ENCODE measurements at regions of chr10 and their contacts with region 1.

Region 1: DNA sequence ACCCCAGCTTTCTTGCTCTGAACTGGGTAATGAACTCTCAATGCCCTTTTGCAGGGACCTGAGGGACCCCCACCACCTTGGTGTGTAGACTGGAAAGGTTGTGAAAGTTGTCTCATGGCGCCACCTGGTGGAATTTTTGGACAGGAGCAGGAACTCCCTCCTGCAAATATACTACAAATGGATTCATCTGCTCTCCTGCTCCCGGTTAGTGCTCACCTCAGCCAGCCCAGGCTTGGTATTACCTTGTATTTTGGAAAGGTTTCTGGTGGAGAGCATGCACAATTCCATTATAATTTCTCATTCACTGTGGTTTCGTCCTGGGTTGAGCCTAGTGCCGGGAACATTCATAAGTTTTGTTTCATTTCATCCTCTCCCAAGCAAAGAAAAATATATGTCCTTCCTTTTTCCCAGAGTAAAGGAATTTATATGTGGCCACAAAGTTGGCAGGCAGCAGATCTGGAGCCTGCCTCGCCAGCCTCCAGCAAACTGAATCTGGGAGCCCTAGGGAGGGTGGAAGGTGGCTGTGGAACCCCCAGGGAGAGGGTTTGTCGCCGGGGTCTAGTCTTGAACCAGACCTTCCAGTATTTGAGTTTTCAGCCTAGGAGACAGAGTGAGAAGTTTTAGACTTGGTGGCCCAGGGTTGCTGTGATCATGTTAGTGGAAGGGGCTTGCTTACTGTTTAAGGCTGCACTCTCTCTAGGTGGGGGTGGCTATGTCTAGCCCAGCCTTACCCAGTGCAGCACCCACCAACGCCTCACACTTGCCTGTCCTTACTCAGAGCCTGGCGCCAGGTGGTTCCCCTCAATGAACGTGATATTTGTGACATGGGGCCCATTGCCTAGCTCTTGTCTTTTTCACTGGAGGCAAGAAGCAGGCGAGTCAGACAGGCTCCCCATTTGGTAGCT is 9.5 kb downstream of the FAM241B start:
- DNase-seq: peak in 2 of 3 donors; percentile 58 to 82
- ATAC-seq: peak; percentile 38 to 58
- H3K4me3 ChIP-seq: no peak overlapping the region
- H3K27ac ChIP-seq: no peak overlapping the region
- H3K4me1 ChIP-seq: no peaks in the 10 kb centered on the region
- H3K27me3 ChIP-seq: no peaks in the 10 kb centered on the region

Region 2: GRCh38 chr10:69408318-69409175 is 231.0 kb before region 1 on chr10:
- intact Hi-C with region 1: loop called in 1 of 4 experiments (anchors 10 kb)
- DNase-seq: peak; percentile 97 to 98 (median 98)
- ATAC-seq: peak; percentile 83 to 87
- H3K4me3 ChIP-seq: peak overlapping the region; percentile 26
- H3K27ac ChIP-seq: peak overlapping the region; percentile 90
- H3K4me1 ChIP-seq: peaks cover 10% of the 10 kb centered on the region
- H3K27me3 ChIP-seq: no peaks in the 10 kb centered on the region

Region 3: GRCh38 chr10:69425511-69426298 is 213.8 kb before region 1 on chr10:
- intact Hi-C with region 1: loop called in 3 of 4 experiments (anchors 10 kb)
- DNase-seq: no peak
- ATAC-seq: no peak
- H3K4me3 ChIP-seq: no peak overlapping the region
- H3K27ac ChIP-seq: no peak overlapping the region
- H3K4me1 ChIP-seq: no peaks in the 10 kb centered on the region
- H3K27me3 ChIP-seq: no peaks in the 10 kb centered on the region

Region 4: GRCh38 chr10:69515699-69516259 is 123.8 kb before region 1 on chr10:
- intact Hi-C with region 1: loop called (anchors 2 to 5 kb)
- DNase-seq: peak; percentile 64 to 85 (median 85)
- ATAC-seq: peak; percentile 84 to 88
- H3K4me3 ChIP-seq: no peak overlapping the region
- H3K27ac ChIP-seq: no peak overlapping the region
- H3K4me1 ChIP-seq: no peaks in the 10 kb centered on the region
- H3K27me3 ChIP-seq: no peaks in the 10 kb centered on the region

Region 5: GRCh38 chr10:69716711-69717560 is 77.4 kb after region 1 on chr10:
- intact Hi-C with region 1: loop called in 3 of 4 experiments (anchors 2 to 5 kb)
- DNase-seq: peak; percentile 45 to 79 (median 69)
- ATAC-seq: peak; percentile 24 to 50
- H3K4me3 ChIP-seq: no peak overlapping the region
- H3K27ac ChIP-seq: no peak overlapping the region
- H3K4me1 ChIP-seq: no peaks in the 10 kb centered on the region
- H3K27me3 ChIP-seq: no peaks in the 10 kb centered on the region

Region 6: DNA sequence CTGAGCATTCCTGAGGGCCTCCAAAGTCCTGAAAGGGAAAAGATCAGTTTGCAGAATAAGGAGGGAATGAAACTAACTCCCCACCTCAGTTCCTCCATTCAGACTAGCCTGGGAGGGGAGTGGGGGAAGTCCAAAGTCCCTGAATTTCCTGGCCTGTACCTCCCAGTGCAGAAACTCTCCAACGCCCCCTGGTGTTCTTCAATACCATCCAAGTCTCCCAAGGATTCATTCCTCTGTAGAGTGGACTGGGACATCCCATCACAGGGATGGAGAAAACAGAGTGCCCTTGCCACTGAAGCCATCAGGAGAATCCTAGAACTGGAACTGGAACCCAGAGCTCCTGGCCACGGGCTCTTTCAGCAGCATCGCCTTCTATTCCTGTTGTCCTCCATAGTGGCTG is 160.6 kb after region 1 on chr10:
- intact Hi-C with region 1: loop called in 1 of 4 experiments (anchors 5 kb)
- DNase-seq: no peak
- ATAC-seq: peak; percentile 34 to 52
- H3K4me3 ChIP-seq: no peak overlapping the region
- H3K27ac ChIP-seq: no peak overlapping the region
- H3K4me1 ChIP-seq: peaks cover 3% of the 10 kb centered on the region
- H3K27me3 ChIP-seq: no peaks in the 10 kb centered on the region

Region 7: DNA sequence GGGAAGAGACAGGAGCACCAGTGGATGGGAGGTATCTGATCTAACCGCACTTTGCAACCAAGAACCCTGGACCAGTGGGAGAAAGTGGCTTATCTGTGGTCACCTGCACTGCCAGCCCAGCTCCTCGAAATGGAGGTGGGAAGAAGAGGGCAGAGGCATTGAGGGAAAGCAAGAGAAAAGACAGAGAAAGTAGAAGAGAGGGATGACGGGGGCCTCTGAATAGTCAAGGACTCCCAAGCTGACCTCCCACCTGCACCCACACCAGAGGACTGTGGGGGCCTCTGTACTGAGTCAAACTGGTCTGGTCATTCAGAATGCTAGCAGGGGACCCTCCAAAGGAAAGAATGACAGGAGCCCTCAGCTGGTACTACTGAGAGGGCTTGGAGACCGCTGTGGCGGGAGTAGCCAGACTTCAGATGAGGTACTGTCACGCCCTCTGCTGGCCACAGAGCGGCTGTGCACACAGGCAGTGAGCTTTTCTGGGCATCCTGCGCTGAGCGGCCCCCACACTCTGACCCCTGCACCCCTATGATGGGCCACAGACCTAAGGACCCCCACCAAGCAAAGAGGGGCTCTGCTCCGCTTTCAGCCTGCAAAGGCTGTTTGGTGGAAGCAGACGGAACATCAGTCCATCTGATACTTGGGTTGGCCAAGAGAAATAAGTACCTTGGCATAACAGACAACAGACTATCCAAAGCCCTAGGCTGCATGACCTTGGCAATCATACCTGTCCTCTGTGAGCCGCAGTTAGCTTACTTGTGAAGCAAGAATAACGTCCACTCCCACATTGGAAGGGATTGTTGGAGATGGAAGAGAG is 275.1 kb after region 1 on chr10:
- intact Hi-C with region 1: loop called in 3 of 4 experiments (anchors 2 to 10 kb)
- DNase-seq: peak; percentile 77 to 91 (median 86)
- ATAC-seq: peak; percentile 71 to 78
- H3K4me3 ChIP-seq: no peak overlapping the region
- H3K27ac ChIP-seq: no peak overlapping the region
- H3K4me1 ChIP-seq: peaks cover 19% of the 10 kb centered on the region
- H3K27me3 ChIP-seq: no peaks in the 10 kb centered on the region

Measured in right cardiac atrium (tissue), 5 donors.